ENCODE measurements at regions of chr1 and their contacts with region 1.

Region 1: DNA sequence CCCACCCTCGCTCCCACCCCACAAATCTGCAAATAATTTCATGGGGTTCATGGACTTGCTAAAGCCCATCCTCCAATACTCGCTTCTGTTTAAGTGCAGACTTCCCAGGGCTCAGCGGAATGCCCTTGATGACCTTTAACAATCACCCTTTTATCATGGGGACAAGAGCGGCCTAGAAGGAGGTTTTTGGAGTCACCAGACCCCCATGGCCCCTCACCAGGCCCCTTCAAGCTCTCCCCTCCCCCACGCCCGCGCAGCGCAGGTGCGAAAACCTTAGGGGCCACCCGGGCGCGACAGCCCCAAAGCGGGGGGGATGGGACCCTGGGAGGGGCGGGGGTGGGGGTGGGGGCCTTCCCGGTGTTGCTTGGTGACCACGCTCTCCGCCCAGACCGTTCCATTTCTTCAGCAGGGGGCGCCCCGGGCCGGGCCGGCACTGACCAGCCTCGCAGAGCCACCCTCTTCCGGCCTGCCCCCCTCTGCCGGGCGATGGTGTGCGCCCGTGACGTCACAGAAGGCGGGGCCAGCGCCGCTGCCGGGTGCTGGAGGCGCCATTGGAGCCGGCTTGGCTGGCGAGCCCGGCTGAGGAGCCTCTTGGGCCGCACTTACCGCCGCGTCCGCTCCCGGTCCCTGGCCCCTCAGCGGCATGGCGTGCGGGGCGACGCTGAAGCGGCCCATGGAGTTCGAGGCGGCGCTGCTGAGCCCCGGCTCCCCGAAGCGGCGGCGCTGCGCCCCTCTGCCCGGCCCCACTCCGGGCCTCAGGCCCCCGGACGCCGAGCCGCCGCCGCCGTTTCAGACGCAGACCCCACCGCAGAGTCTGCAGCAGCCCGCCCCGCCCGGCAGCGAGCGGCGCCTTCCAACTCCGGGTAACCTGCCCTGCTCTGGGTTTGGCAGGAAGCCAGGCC is at the start of gene AKIRIN1:
- DNase-seq: peak; percentile 96
- H3K4me3 Mint-ChIP-seq: peak within 1 kb of the TSS; percentile 91
- H3K27ac Mint-ChIP-seq: peak within 1 kb of the TSS; percentile 72
- H3K4me1 Mint-ChIP-seq: peaks cover 50% of the 10 kb centered on the region
- H3K27me3 Mint-ChIP-seq: no peaks in the 10 kb centered on the region
- total RNA-seq, gene AKIRIN1: 68.8 to 72.5 TPM

Region 2: GRCh38 chr1:38973659-38974424 is 17.1 kb before region 1 on chr1:
- CTCF ChIA-PET with region 1: interaction called, 3 read pairs
- POLR2A ChIA-PET with region 1: interaction called, 17 read pairs
- DNase-seq: no peak
- H3K4me3 Mint-ChIP-seq: no peak overlapping the region
- H3K27ac Mint-ChIP-seq: no peak overlapping the region
- H3K4me1 Mint-ChIP-seq: peaks cover 21% of the 10 kb centered on the region
- H3K27me3 Mint-ChIP-seq: no peaks in the 10 kb centered on the region

Region 3: GRCh38 chr1:39017266-39017665 is 26.3 kb after region 1 on chr1:
- CTCF ChIA-PET with region 1: no interaction called
- POLR2A ChIA-PET with region 1: no interaction called
- DNase-seq: no peak
- H3K4me3 Mint-ChIP-seq: no peak overlapping the region
- H3K27ac Mint-ChIP-seq: no peak overlapping the region
- H3K4me1 Mint-ChIP-seq: no peaks in the 10 kb centered on the region
- H3K27me3 Mint-ChIP-seq: peaks cover 2% of the 10 kb centered on the region